A549 (cell line): ENCODE measurements at regions of chr22 and their contacts with region 1.

Region 1: GRCh38 chr22:25772288-25772687 is 30.3 kb downstream of the MYO18B start:
- DNase-seq: no peak
- ATAC-seq: no peak
- H3K4me3 ChIP-seq: no peak overlapping the region
- H3K27ac ChIP-seq: no peak overlapping the region
- H3K4me1 ChIP-seq: no peaks in the 10 kb centered on the region
- CTCF ChIP-seq: no peak
- EP300 ChIP-seq: no peak
- POLR2A ChIP-seq: no peak
- RAD21 ChIP-seq: no peak

Region 2: GRCh38 chr22:25452116-25452700 is 320.1 kb before region 1 on chr22:
- CTCF ChIA-PET with region 1: interaction called, 10 read pairs
- POLR2A ChIA-PET with region 1: no interaction called
- DNase-seq: no peak
- ATAC-seq: no peak
- H3K4me3 ChIP-seq: no peak overlapping the region
- H3K27ac ChIP-seq: no peak overlapping the region
- H3K4me1 ChIP-seq: peaks cover 8% of the 10 kb centered on the region; the same call in 1 of the 3 replicates
- CTCF ChIP-seq: no peak
- EP300 ChIP-seq: no peak
- POLR2A ChIP-seq: no peak
- RAD21 ChIP-seq: no peak

Region 3: GRCh38 chr22:25709758-25710157 is 62.5 kb before region 1 on chr22:
- CTCF ChIA-PET with region 1: interaction called, 10 read pairs
- POLR2A ChIA-PET with region 1: no interaction called
- DNase-seq: no peak
- ATAC-seq: no peak
- H3K4me3 ChIP-seq: no peak overlapping the region
- H3K27ac ChIP-seq: no peak overlapping the region
- H3K4me1 ChIP-seq: no peaks in the 10 kb centered on the region
- CTCF ChIP-seq: no peak
- EP300 ChIP-seq: no peak
- POLR2A ChIP-seq: no peak
- RAD21 ChIP-seq: no peak

Region 4: GRCh38 chr22:25759825-25760231 is 12.5 kb before region 1 on chr22:
- CTCF ChIA-PET with region 1: interaction called, 31 read pairs
- POLR2A ChIA-PET with region 1: no interaction called
- DNase-seq: peak; percentile 39 to 84
- ATAC-seq: peak; percentile 85 to 90
- H3K4me3 ChIP-seq: no peak overlapping the region
- H3K27ac ChIP-seq: peak overlapping the region; percentile 47 to 61; a peak in 5 of 6 replicates
- H3K4me1 ChIP-seq: peaks cover 12% of the 10 kb centered on the region; the same call in 2 of the 3 replicates
- CTCF ChIP-seq: no peak
- EP300 ChIP-seq: 0 out of 5 replicates have a peak, but pooled peaks of 1 of the 2 experiments have one; percentile 21
- POLR2A ChIP-seq: no peak
- RAD21 ChIP-seq: no peak

Region 5: DNA sequence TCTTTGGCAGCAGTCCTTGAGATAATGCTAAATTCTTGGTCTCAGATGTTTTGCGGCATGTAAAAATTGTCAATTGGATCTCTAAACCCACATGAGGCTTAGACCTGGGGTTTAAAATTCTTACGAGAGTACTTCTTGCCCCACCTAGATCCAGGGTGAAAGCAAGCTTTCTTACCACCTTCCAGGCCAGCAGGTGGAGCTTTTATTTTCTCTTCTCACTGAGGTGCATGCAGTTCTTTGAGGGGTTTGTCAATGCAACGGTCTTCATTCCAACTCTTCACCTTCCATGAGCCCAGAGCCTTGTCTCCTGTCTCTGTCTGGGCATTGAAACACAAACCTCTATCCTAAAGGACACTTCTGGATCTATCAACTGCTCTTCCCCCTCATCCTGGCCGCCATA is 123.8 kb after region 1 on chr22:
- CTCF ChIA-PET with region 1: no interaction called
- POLR2A ChIA-PET with region 1: no interaction called
- DNase-seq: peak in 1 of 2 experiments; percentile 1
- ATAC-seq: no peak
- H3K4me3 ChIP-seq: no peak overlapping the region
- H3K27ac ChIP-seq: no peak overlapping the region
- H3K4me1 ChIP-seq: no peaks in the 10 kb centered on the region
- CTCF ChIP-seq: no peak
- EP300 ChIP-seq: no peak
- POLR2A ChIP-seq: no peak
- RAD21 ChIP-seq: no peak